HCT116 (cell line): ENCODE measurements at regions of chr6 and their contacts with region 1.

Region 1: DNA sequence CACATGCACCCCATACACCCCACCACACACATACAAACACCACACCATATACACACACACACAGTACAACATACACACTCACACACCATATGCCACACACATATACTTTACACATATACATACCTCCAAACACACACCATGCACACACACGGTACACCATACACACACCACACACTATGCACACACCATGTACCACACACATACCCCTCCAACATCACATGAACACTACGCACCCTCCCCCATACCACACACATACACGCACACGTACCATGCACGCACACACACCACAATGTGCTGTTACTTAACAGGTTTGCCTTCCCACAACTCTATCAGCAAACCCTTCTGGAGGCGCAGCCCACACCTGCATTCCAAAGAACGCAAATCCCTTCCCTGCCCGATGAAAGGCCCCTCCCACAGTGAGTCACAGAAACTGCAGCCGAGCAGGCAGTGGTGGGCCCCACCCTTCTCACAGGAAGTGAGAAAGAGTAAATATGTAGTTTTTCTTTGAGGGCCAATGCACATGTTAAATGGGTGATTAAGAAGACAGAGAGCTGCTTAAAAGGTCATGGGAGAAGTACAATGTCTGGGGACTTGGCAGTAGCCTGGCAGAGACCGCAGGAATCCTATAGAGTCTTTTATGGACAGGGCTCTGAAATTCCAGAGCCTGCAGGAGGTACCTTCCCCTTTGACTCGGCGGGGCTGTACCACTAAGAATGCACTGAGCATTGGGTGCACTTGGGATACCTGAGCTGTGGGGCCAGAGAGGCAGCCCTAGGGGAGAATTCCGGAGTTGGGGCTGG is 34.1 kb upstream of the EZR start:
- DNase-seq: peak; percentile 97
- ATAC-seq: peak; percentile 78
- H3K4me3 ChIP-seq: peak overlapping the region; percentile 42 to 56
- H3K27ac ChIP-seq: peak overlapping the region; percentile 85
- H3K4me1 ChIP-seq: peaks cover 80 to 100% of the 10 kb centered on the region in 2 experiments
- H3K27me3 ChIP-seq: no peaks in the 10 kb centered on the region
- CTCF ChIP-seq: no peak
- POLR2A ChIP-seq: no peak
- RAD21 ChIP-seq: no peak

Region 2: DNA sequence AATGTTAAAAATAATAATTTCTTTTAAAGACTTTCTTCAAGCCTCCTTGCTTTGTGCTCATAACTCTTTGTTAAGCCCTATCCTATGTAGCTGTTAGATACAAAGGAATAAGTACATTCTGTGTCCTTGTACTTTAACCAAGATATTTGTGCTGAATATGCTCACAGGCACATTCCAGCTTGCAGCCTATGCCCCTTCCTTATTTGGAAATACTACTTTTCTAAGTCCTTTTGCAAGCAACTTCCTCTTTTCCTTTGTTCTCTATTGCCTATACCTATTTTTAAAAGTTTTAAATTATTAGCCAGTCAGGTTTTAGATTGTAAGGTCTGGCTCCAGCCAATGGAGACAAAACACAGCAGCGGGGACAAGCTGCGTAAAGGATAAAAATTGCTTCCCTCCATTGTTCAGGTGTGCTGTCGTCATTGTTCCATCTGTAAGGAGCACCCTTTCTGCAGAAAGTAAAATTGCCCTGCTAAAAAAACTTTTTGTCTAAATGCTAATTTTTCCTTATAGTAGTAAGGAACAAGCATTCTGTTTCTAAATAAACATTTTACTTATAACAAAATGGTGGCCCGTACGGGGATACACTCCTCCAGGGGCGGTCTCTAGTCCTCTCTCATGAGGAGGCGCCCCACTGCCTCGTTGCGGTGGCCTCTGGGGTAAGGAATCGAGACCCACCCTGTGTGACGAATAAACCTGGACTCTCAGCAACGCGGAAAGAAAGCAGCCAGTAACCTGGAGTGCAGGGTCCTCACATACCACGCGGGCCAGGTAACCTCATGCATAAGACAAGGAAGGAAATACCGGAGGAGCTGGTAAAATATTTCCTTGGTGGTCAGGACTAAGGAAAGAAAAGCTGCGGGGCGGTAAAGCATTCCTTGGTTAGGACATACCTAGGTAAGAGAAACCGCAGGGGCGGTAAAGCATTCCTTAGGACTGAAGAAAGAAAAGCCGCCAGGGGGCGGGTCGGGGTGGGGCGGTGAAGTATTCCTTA is 123.1 kb before region 1 on chr6:
- CTCF ChIA-PET with region 1: no interaction called
- POLR2A ChIA-PET with region 1: no interaction called
- RAD21 ChIA-PET with region 1: interaction called in 1 of 2 experiments, 5 read pairs
- intact Hi-C with region 1: loop called (anchors 1 kb)
- DNase-seq: peak; percentile 100
- ATAC-seq: peak; percentile 85
- H3K4me3 ChIP-seq: peak overlapping the region; percentile 7 to 12; a peak in 2 of 4 replicates
- H3K27ac ChIP-seq: peak overlapping the region; percentile 97
- H3K4me1 ChIP-seq: peaks cover 44 to 79% of the 10 kb centered on the region in 2 experiments
- H3K27me3 ChIP-seq: no peaks in the 10 kb centered on the region
- CTCF ChIP-seq: no peak
- POLR2A ChIP-seq: peak; percentile 37
- RAD21 ChIP-seq: no peak

Region 3: DNA sequence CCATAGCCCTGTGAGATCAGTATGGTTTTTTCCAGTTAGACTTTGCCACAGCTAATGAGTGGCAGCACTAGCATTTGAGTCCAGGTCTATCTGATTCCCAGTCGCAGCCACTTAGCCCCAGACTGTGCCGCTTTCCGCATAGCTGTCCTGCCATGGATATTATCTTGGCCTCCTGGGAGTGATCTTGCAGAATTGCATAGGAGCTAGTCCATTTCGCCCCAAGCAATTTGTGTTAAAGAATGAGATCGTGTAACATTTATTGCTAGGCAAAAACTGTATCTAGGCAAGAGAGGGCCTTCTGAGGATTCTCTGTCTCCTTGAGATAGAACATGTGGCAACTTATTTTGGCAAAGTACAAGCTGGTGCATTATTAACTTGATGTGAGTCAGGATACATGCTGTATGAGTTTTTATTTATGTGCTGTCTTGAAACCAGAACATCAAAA is 108.3 kb before region 1 on chr6:
- CTCF ChIA-PET with region 1: no interaction called
- POLR2A ChIA-PET with region 1: no interaction called
- RAD21 ChIA-PET with region 1: no interaction called
- intact Hi-C with region 1: no loop called
- DNase-seq: no peak
- ATAC-seq: no peak
- H3K4me3 ChIP-seq: no peak overlapping the region
- H3K27ac ChIP-seq: peak overlapping the region; percentile 54
- H3K4me1 ChIP-seq: peaks cover 40 to 73% of the 10 kb centered on the region in 2 experiments
- H3K27me3 ChIP-seq: no peaks in the 10 kb centered on the region
- CTCF ChIP-seq: no peak
- POLR2A ChIP-seq: no peak
- RAD21 ChIP-seq: no peak

Region 4: DNA sequence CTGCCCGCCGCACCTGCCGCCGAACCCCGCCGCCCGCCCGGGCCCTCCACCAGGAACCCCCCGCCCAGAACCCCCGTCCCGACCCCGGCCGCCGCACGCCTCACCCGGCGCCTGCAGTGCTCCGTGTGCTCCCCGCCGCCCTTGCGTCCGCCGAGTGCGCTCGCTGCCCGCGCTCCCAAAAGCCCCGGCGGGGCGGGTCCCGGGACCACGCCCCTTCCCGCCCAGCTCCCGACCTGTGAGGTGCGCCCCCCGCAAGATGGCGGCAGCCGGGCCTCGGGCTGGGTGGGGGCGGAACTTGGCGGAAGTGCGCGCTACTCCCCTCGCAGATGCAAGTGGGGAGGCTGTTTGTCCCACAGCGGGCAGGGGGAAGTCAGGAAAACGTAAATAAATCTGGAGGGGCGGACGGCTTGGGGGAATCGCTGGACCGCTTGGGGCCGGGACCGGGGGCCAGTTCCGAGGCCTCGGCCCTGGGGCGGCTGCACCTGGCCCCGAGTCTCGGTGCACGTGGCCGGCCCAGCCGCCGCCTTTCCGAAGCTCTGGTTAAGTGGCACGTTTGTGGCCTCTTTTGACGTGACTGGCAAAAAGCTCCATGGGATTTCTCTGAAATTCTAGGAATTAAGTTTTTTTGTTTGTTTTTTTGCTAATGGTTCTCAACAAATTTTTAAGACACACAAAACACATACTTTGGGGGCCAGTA is 33.9 kb before region 1 on chr6 and contains the start of gene EZR:
- CTCF ChIA-PET with region 1: no interaction called
- POLR2A ChIA-PET with region 1: interaction called, 15 read pairs
- RAD21 ChIA-PET with region 1: interaction called in 1 of 2 experiments, 4 read pairs
- intact Hi-C with region 1: loop called (anchors 1 kb)
- DNase-seq: peak; percentile 73
- ATAC-seq: peak; percentile 73
- H3K4me3 ChIP-seq: peak within 1 kb of the TSS; percentile 77 to 81
- H3K27ac ChIP-seq: peak within 1 kb of the TSS; percentile 92
- H3K4me1 ChIP-seq: peaks cover 28 to 39% of the 10 kb centered on the region in 2 experiments
- H3K27me3 ChIP-seq: no peaks in the 10 kb centered on the region
- CTCF ChIP-seq: 0 out of 6 replicates have a peak, but pooled peaks of 1 of the 3 experiments have one; percentile 2
- POLR2A ChIP-seq: peak; percentile 80
- RAD21 ChIP-seq: no peak
- total RNA-seq, gene EZR: 1,402 TPM

Region 5: GRCh38 chr6:158999666-159000403 is 146.6 kb after region 1 on chr6 and contains the start of gene RSPH3:
- CTCF ChIA-PET with region 1: no interaction called
- POLR2A ChIA-PET with region 1: no interaction called
- RAD21 ChIA-PET with region 1: no interaction called
- intact Hi-C with region 1: loop called (anchors 5 kb)
- DNase-seq: peak; percentile 96
- ATAC-seq: peak; percentile 80
- H3K4me3 ChIP-seq: peak within 1 kb of the TSS; percentile 88 to 92
- H3K27ac ChIP-seq: peak within 1 kb of the TSS; percentile 85
- H3K4me1 ChIP-seq: peaks cover 37 to 69% of the 10 kb centered on the region in 2 experiments
- H3K27me3 ChIP-seq: no peaks in the 10 kb centered on the region
- CTCF ChIP-seq: 0 out of 6 replicates have a peak, but pooled peaks of 1 of the 3 experiments have one; percentile 7
- POLR2A ChIP-seq: peak; percentile 94
- RAD21 ChIP-seq: no peak
- total RNA-seq, gene RSPH3: 24.7 TPM

Region 6: GRCh38 chr6:159633196-159633595 is 779.9 kb after region 1 on chr6:
- CTCF ChIA-PET with region 1: no interaction called
- POLR2A ChIA-PET with region 1: no interaction called
- RAD21 ChIA-PET with region 1: no interaction called
- intact Hi-C with region 1: no loop called
- DNase-seq: peak; percentile 37
- ATAC-seq: peak; percentile 88
- H3K4me3 ChIP-seq: no peak overlapping the region
- H3K27ac ChIP-seq: no peak overlapping the region
- H3K4me1 ChIP-seq: no peaks in the 10 kb centered on the region
- H3K27me3 ChIP-seq: no peaks in the 10 kb centered on the region
- CTCF ChIP-seq: peak; percentile 42 to 88 (median 82); a peak in 5 of 6 replicates
- POLR2A ChIP-seq: no peak
- RAD21 ChIP-seq: peak; percentile 54